Right cardiac atrium (tissue), 5 donors: ENCODE measurements at regions of chr1 and their contacts with region 1.

Region 1: DNA sequence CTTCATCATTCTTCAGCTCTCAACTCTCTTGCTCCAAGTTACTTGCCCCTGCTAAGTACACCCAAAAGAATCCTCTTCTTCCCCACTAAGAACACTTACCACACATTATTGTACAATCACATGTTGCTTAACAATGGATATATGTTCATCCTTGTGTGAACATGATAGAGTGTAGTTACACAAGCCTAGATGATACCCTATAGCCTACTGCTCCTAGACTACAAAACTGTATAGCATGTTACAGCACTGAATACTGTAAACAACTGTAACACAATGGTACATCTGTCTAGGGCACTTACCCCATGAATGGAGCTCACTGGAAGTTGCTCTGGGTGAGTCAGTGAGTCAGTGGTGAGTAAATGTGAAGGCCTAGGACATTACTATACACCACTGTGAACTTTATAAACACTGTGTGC is 77.4 kb downstream of the RERE start:
- DNase-seq: no peak
- ATAC-seq: no peak
- H3K4me3 ChIP-seq: no peak overlapping the region
- H3K27ac ChIP-seq: no peak overlapping the region
- H3K4me1 ChIP-seq: no peaks in the 10 kb centered on the region
- H3K27me3 ChIP-seq: no peaks in the 10 kb centered on the region

Region 2: DNA sequence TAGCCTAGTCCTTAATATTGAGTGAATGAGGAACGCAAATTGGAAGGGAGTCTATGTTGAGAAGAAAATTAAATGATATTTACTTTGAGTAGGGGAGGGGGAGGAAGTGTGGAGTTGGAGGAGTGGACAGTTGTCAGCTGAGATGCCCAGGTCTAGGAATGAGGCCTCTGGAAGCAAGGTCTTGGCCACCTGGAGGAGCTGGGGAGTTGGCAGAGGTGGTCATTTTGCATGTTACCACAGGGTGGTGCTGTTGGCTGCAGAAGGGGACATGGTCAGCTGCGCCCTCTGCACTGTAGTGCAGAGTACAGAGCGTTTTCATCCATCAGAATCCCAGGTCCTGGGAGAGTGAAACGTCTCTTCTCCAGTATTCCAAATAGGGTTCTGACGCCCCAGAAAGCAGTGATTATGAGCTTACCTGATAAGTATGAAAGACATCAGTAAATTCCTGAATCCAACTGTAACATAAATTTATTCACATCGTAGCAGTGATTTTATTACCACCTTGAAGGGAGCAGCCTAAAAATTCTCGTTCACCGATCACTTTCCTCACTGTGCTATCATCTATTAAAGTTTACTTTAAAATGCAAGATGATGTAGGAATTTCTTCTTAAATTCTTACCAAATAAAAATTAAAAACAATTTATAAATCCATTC is 764.7 kb before region 1 on chr1:
- intact Hi-C with region 1: loop called in 1 of 4 experiments (anchors 10 kb)
- DNase-seq: peak; percentile 70 to 83 (median 75)
- ATAC-seq: peak; percentile 95
- H3K4me3 ChIP-seq: no peak overlapping the region
- H3K27ac ChIP-seq: no peak overlapping the region
- H3K4me1 ChIP-seq: peaks cover 2% of the 10 kb centered on the region
- H3K27me3 ChIP-seq: no peaks in the 10 kb centered on the region

Region 3: DNA sequence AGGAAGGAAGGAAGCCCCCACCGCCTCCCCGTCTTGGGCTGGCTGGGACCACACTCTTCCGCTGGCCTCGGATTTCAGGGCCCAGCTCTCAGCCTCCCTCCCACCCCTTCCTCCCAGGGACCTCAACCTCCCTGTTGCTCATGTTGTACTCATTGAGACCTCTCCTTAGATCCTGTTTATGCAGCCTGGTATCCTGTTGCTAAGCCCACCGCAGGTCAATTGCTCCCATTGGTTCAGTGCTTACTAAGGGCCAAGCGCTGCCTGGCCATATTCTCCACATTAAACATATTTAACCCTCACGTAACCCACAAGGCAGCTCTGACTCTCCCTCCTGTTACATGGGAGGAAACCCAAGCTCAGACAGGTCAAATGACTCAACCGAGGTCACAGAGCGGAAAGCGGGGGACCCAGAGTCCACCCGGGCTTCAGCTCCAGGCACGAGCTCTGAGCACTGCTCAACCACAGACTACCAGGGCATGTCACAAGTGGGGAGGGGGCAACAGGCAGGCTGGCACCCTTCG is 471.3 kb after region 1 on chr1:
- intact Hi-C with region 1: no loop called
- DNase-seq: no peak
- ATAC-seq: no peak
- H3K4me3 ChIP-seq: no peak overlapping the region
- H3K27ac ChIP-seq: no peak overlapping the region
- H3K4me1 ChIP-seq: no peaks in the 10 kb centered on the region
- H3K27me3 ChIP-seq: no peaks in the 10 kb centered on the region